ENCODE measurements at regions of chr19 and their contacts with region 1.

Region 1: GRCh38 chr19:38676023-38676877 is 28.8 kb downstream of the ACTN4 start:
- DNase-seq: no peak
- H3K4me3 ChIP-seq: no peak overlapping the region
- H3K27ac ChIP-seq: 0 out of 2 replicates have a peak overlapping the region, but pooled peaks have one; percentile 5
- H3K4me1 ChIP-seq: peaks cover 3 to 12% (median 6%) of the 10 kb centered on the region in 4 experiments
- H3K27me3 ChIP-seq: no peaks in the 10 kb centered on the region
- CTCF ChIP-seq: no peak
- EP300 ChIP-seq: no peak
- POLR2A ChIP-seq: no peak
- RAD21 ChIP-seq: no peak

Region 2: GRCh38 chr19:38693380-38694223 is 17.4 kb after region 1 on chr19:
- CTCF ChIA-PET with region 1: interaction called, 10 read pairs
- POLR2A ChIA-PET with region 1: interaction called, 495 read pairs
- DNase-seq: no peak
- H3K4me3 ChIP-seq: no peak overlapping the region
- H3K27ac ChIP-seq: peak overlapping the region; percentile 84
- H3K4me1 ChIP-seq: peaks cover 3 to 36% (median 20%) of the 10 kb centered on the region in 4 experiments
- H3K27me3 ChIP-seq: no peaks in the 10 kb centered on the region
- CTCF ChIP-seq: no peak
- EP300 ChIP-seq: peak in 1 of 2 experiments; percentile 16; a peak in 1 of 3 replicates
- POLR2A ChIP-seq: peak in 1 of 2 experiments; percentile 76; a peak in 2 of 3 replicates
- RAD21 ChIP-seq: no peak

Region 3: GRCh38 chr19:38784224-38784623 is 108.0 kb after region 1 on chr19:
- CTCF ChIA-PET with region 1: no interaction called
- POLR2A ChIA-PET with region 1: no interaction called
- DNase-seq: no peak
- H3K4me3 ChIP-seq: no peak overlapping the region
- H3K27ac ChIP-seq: no peak overlapping the region
- H3K4me1 ChIP-seq: no peaks in the 10 kb centered on the region; a peak in 1 of 7 replicates
- H3K27me3 ChIP-seq: no peaks in the 10 kb centered on the region
- CTCF ChIP-seq: no peak
- EP300 ChIP-seq: no peak
- POLR2A ChIP-seq: no peak
- RAD21 ChIP-seq: no peak

Measured in H1 (cell line).